HepG2 (cell line): ENCODE measurements at regions of chr7 and their contacts with region 1.

Region 1: DNA sequence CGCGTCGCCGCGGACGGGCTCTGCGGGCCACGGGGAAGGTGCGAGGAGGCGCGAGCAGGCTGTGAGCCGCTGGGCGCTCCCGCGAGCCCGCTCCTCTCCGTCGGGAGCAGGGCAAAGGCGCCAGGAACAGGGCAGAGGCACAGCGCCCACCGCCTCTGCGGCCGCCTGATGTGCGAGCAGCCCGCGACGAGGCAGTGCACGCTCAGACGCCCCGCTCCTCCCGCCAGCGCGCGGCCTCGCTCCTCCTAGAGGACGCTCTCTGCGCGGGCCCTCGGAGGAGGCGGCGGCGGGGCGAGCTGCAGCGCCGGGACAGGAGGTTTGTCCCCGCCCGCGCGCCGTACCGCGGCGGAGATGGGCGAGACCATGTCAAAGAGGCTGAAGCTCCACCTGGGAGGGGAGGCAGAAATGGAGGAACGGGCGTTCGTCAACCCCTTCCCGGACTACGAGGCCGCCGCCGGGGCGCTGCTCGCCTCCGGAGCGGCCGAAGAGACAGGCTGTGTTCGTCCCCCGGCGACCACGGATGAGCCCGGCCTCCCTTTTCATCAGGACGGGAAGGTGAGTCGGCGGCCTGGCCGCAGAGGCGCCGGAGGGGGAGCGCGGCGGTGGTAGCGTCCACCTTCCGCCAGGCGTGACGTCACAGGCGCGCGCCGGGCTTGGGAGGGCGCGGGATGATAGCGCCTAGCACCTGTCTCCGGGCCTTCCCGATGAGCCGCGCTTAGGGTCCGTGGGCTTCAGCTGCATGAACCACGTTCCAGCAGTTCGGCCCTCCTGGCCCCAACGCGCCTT is 731 bp downstream of the LANCL2 start:
- DNase-seq: peak; percentile 86
- ATAC-seq: peak; percentile 94
- H3K4me3 ChIP-seq: peak overlapping the region; percentile 98 to 99 (median 98)
- H3K27ac ChIP-seq: peak overlapping the region; percentile 99
- H3K4me1 ChIP-seq: peaks cover 44% of the 10 kb centered on the region
- H3K27me3 ChIP-seq: no peaks in the 10 kb centered on the region; a peak in 1 of 5 replicates
- CTCF ChIP-seq: peak; percentile 62
- EP300 ChIP-seq: no peak; a peak in 1 of 4 replicates
- POLR2A ChIP-seq: peak; percentile 83 to 93
- RAD21 ChIP-seq: peak; percentile 35

Region 2: GRCh38 chr7:55325371-55325792 is 40.5 kb before region 1 on chr7:
- CTCF ChIA-PET with region 1: no interaction called
- POLR2A ChIA-PET with region 1: no interaction called
- in situ Hi-C with region 1: no loop called
- intact Hi-C with region 1: no loop called
- DNase-seq: no peak
- ATAC-seq: no peak
- H3K4me3 ChIP-seq: no peak overlapping the region
- H3K27ac ChIP-seq: no peak overlapping the region
- H3K4me1 ChIP-seq: no peaks in the 10 kb centered on the region
- H3K27me3 ChIP-seq: peaks cover 1 to 16% of the 10 kb centered on the region in 2 experiments; a peak in 2 of 5 replicates
- CTCF ChIP-seq: no peak
- EP300 ChIP-seq: no peak
- POLR2A ChIP-seq: no peak
- RAD21 ChIP-seq: no peak

Region 3: DNA sequence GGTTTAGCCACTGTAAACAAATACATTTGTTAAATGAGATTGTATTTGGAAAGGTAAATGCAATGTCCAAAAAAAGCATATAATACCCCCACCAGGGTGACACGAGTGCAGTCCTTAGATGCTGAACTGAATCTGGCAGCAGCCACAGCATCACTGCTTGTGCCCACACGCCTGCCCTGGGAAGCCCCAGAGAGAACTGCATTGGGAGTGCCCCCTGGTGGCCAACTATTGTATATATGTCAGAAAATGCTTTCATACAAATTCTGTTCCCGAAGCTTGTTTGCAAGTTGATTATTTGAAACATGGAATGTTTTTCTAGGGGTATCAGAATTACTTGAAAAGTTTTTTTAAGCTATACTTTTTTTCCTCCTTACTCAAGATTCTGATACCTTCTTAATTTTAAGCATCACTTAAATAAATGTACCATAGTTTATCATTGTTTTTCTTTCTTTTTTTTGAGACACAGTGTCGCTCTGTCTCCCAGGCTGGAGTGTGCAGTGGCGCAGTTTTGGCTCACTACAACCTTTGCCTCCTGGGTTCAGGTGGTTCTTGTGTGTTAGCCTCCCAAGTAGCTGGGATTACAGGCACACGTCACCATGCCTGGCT is 49.4 kb after region 1 on chr7:
- CTCF ChIA-PET with region 1: no interaction called
- POLR2A ChIA-PET with region 1: interaction called, 5 read pairs
- in situ Hi-C with region 1: no loop called
- intact Hi-C with region 1: loop called (anchors 2 kb)
- DNase-seq: peak; percentile 62
- ATAC-seq: peak; percentile 95
- H3K4me3 ChIP-seq: no peak overlapping the region
- H3K27ac ChIP-seq: no peak overlapping the region
- H3K4me1 ChIP-seq: peaks cover 3% of the 10 kb centered on the region
- H3K27me3 ChIP-seq: no peaks in the 10 kb centered on the region
- CTCF ChIP-seq: peak; percentile 75
- EP300 ChIP-seq: no peak
- POLR2A ChIP-seq: no peak
- RAD21 ChIP-seq: peak; percentile 53; the same call in 1 of the 2 replicates

Region 4: GRCh38 chr7:55572378-55573233 is 206.7 kb after region 1 on chr7 and contains the start of gene VOPP1:
- CTCF ChIA-PET with region 1: no interaction called
- POLR2A ChIA-PET with region 1: interaction called, 3 read pairs
- in situ Hi-C with region 1: no loop called
- intact Hi-C with region 1: loop called (anchors 2 kb)
- DNase-seq: peak; percentile 35
- ATAC-seq: peak; percentile 79
- H3K4me3 ChIP-seq: peak within 1 kb of the TSS; percentile 74 to 85 (median 84)
- H3K27ac ChIP-seq: peak within 1 kb of the TSS; percentile 91
- H3K4me1 ChIP-seq: peaks cover 41% of the 10 kb centered on the region
- H3K27me3 ChIP-seq: no peaks in the 10 kb centered on the region; a peak in 1 of 5 replicates
- CTCF ChIP-seq: no peak
- EP300 ChIP-seq: no peak
- POLR2A ChIP-seq: no peak
- RAD21 ChIP-seq: no peak; the same call in 1 of the 2 replicates
- total RNA-seq, gene VOPP1: 49.9 and 55.3 TPM in 2 replicates